ENCODE measurements at regions of chr15 and their contacts with region 1.

Region 1: DNA sequence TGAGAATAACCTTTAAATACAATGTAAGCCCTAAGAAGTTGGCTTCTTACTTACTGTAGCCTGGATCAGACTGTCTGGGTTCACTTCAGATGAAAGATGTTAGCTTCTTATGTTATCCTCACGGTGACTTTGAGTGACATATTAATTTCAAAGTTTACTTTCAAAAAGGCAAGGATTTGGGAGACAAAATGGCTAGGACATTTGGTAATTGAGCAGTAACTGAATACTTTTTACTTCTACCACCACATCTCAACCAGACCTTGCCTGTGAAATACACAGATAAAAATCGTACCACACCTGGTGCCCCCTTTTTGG is 36.0 kb upstream of the BNIP2 start:
- DNase-seq: no peak
- H3K4me3 ChIP-seq: no peak overlapping the region; a peak in 1 of 4 replicates
- H3K27ac ChIP-seq: no peak overlapping the region
- H3K4me1 ChIP-seq: no peaks in the 10 kb centered on the region
- H3K27me3 ChIP-seq: peaks cover 55% of the 10 kb centered on the region; the same call in 1 of the 2 replicates
- CTCF ChIP-seq: no peak
- EP300 ChIP-seq: no peak
- RAD21 ChIP-seq: no peak

Region 2: GRCh38 chr15:59622289-59622688 is 102.8 kb before region 1 on chr15:
- CTCF ChIA-PET with region 1: no interaction called
- POLR2A ChIA-PET with region 1: no interaction called
- DNase-seq: peak; percentile 54
- H3K4me3 ChIP-seq: no peak overlapping the region
- H3K27ac ChIP-seq: no peak overlapping the region
- H3K4me1 ChIP-seq: no peaks in the 10 kb centered on the region
- H3K27me3 ChIP-seq: peaks cover 29% of the 10 kb centered on the region; the same call in 1 of the 2 replicates
- CTCF ChIP-seq: peak; percentile 50
- EP300 ChIP-seq: no peak
- RAD21 ChIP-seq: peak; percentile 51

Region 3: DNA sequence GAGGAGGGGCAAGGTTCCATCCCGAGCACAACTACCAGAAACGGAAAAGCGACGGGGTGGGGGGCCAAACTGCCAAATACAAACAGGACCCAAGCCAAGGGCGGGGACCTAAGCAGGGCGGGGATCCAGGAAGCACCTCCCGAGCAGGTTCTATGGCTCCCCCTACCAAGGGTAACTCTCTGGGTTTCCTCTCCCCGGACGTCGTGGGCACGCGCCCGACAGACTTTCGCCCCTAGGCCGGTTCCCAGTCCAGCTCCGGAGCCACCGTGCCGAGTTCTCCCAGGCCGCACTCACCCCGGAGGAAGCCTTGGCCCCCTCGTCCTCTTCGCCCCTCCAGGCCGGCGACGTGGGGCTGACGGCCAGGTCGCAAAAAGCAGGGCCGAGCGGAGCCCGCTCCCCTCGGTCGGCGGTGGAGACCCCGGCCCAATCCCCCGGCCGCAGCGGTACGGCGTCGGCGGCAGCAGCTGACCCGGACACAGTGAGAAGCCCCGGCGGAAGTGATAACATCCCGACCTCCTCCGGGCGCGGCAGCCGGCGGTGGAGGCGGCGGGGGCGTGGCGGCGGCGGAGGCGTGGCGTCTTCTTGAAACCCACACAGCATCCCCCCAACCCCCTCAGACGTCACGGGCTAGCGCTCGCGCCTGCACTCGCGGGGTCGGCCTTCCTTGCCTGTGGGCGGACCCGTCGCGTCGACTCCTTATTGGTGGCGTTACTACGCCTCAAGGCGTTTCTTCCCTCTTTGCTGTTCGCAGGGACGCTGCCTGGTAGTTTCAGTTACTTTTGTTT is 36.1 kb before region 1 on chr15 and contains the start of gene BNIP2:
- CTCF ChIA-PET with region 1: interaction called, 14 read pairs
- POLR2A ChIA-PET with region 1: no interaction called
- DNase-seq: peak; percentile 96
- H3K4me3 ChIP-seq: peak within 1 kb of the TSS; percentile 81 to 86
- H3K27ac ChIP-seq: peak within 1 kb of the TSS; percentile 92 to 93
- H3K4me1 ChIP-seq: peaks cover 16 to 22% of the 10 kb centered on the region in 2 experiments; a peak in 3 of 4 replicates
- H3K27me3 ChIP-seq: no peaks in the 10 kb centered on the region
- CTCF ChIP-seq: 0 out of 2 replicates have a peak, but pooled peaks have one; percentile 6
- EP300 ChIP-seq: 0 out of 4 replicates have a peak, but pooled peaks of 1 of the 2 experiments have one; percentile 26
- RAD21 ChIP-seq: no peak
- polyA plus RNA-seq, gene BNIP2: 37.0 and 67.7 TPM in 2 replicates

Region 4: DNA sequence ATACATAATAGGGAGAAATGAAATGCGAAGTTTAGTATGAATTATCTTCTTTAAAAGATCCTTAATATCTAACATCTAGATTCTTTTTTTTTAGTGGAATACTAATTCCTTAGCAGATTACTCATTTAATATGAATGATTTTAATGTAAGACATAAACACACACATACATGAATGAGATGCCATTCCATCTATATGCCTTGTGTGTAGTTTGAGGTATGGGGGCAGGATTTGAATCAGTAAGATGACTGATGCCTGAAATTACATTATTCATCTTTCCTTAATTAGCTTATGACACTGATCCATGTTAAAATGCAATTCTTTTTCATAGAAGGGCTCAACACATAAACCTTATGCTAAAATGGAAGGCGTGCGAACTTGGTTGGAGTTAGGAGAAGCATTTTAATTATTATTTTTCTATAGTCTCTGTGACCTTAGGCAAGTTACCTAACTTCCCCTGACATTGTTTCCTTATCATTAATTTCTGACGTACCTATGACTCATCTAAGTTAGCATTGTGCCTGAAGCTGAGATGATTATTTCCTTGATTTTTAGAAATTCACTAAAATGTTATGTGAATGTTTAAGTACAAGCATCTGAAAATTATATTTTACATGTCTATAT is 25.2 kb before region 1 on chr15:
- CTCF ChIA-PET with region 1: interaction called, 13 read pairs
- POLR2A ChIA-PET with region 1: no interaction called
- DNase-seq: no peak
- H3K4me3 ChIP-seq: no peak overlapping the region
- H3K27ac ChIP-seq: no peak overlapping the region
- H3K4me1 ChIP-seq: peaks cover 0 to 3% of the 10 kb centered on the region in 2 experiments; a peak in 3 of 4 replicates
- H3K27me3 ChIP-seq: 0 out of 2 replicates have a peak, but pooled peaks cover 6% of the 10 kb centered on the region
- CTCF ChIP-seq: no peak
- EP300 ChIP-seq: no peak
- RAD21 ChIP-seq: no peak

Region 5: GRCh38 chr15:59711451-59712243 is 13.5 kb before region 1 on chr15:
- CTCF ChIA-PET with region 1: interaction called, 24 read pairs
- POLR2A ChIA-PET with region 1: no interaction called
- DNase-seq: no peak
- H3K4me3 ChIP-seq: no peak overlapping the region
- H3K27ac ChIP-seq: no peak overlapping the region
- H3K4me1 ChIP-seq: no peaks in the 10 kb centered on the region; a peak in 1 of 4 replicates
- H3K27me3 ChIP-seq: no peaks in the 10 kb centered on the region; the same call in 1 of the 2 replicates
- CTCF ChIP-seq: no peak
- EP300 ChIP-seq: no peak
- RAD21 ChIP-seq: no peak

Region 6: GRCh38 chr15:59741274-59741906 is 16.3 kb after region 1 on chr15:
- CTCF ChIA-PET with region 1: interaction called, 27 read pairs
- POLR2A ChIA-PET with region 1: no interaction called
- DNase-seq: peak; percentile 52
- H3K4me3 ChIP-seq: no peak overlapping the region
- H3K27ac ChIP-seq: no peak overlapping the region
- H3K4me1 ChIP-seq: no peaks in the 10 kb centered on the region; a peak in 1 of 4 replicates
- H3K27me3 ChIP-seq: no peaks in the 10 kb centered on the region; the same call in 1 of the 2 replicates
- CTCF ChIP-seq: no peak
- EP300 ChIP-seq: no peak
- RAD21 ChIP-seq: peak; percentile 73

Region 7: DNA sequence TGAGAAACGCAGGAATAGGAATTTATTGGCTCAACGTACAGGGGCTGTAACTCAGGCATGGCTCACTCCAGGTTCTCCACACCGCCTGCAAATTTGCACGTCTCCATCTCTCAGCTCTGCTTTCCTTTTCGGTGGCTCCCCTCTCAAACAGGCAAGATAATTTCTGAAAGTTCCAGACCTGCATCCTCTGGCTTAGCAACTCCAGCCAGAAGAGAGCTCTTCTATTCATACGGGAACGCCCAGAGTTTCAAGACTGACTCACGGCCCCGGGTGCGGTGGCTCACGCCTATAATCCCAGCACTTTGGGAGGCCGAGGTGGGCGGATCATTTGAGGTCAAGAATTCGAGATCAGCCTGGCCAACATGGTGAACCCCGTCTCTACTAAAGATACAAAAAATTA is 103.7 kb after region 1 on chr15:
- CTCF ChIA-PET with region 1: no interaction called
- POLR2A ChIA-PET with region 1: no interaction called
- DNase-seq: no peak
- H3K4me3 ChIP-seq: no peak overlapping the region
- H3K27ac ChIP-seq: no peak overlapping the region
- H3K4me1 ChIP-seq: no peaks in the 10 kb centered on the region
- H3K27me3 ChIP-seq: peaks cover 6% of the 10 kb centered on the region; the same call in 1 of the 2 replicates
- CTCF ChIP-seq: no peak
- EP300 ChIP-seq: no peak
- RAD21 ChIP-seq: no peak

Region 8: DNA sequence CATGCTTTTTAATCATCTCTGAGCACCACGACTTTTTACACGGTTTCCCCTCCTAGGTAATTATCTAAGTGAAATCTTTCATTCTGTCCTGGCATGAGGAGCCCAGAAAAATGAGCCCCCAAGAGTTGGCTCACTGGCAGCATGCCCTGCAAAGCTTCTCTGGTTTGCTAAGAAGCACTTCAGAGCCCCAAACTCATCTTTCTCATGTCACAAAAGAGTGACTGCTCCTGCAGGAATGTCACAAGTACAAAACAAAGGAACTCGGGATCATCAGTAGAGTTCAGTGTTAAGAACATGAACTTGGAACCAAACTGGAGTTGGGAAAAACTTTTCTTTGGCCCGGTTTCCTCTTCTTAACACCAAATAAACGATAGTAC is 402.9 kb after region 1 on chr15:
- CTCF ChIA-PET with region 1: interaction called, 12 read pairs
- POLR2A ChIA-PET with region 1: no interaction called
- DNase-seq: no peak
- H3K4me3 ChIP-seq: peak overlapping the region; percentile 62 to 76
- H3K27ac ChIP-seq: peak overlapping the region in 1 of 2 experiments; percentile 29; a peak in 1 of 4 replicates
- H3K4me1 ChIP-seq: no peaks in the 10 kb centered on the region; a peak in 1 of 4 replicates
- H3K27me3 ChIP-seq: no peaks in the 10 kb centered on the region; the same call in 1 of the 2 replicates
- CTCF ChIP-seq: no peak
- EP300 ChIP-seq: no peak
- RAD21 ChIP-seq: no peak

Region 9: GRCh38 chr15:60315878-60316277 is 590.7 kb after region 1 on chr15:
- CTCF ChIA-PET with region 1: interaction called, 13 read pairs
- POLR2A ChIA-PET with region 1: no interaction called
- DNase-seq: no peak
- H3K4me3 ChIP-seq: no peak overlapping the region
- H3K27ac ChIP-seq: no peak overlapping the region
- H3K4me1 ChIP-seq: no peaks in the 10 kb centered on the region
- H3K27me3 ChIP-seq: peaks cover 9% of the 10 kb centered on the region; the same call in 1 of the 2 replicates
- CTCF ChIP-seq: no peak
- EP300 ChIP-seq: no peak
- RAD21 ChIP-seq: no peak

Measured in SK-N-SH (cell line).